A673 (cell line): ENCODE measurements at regions of chr15 and their contacts with region 1.

Region 1: DNA sequence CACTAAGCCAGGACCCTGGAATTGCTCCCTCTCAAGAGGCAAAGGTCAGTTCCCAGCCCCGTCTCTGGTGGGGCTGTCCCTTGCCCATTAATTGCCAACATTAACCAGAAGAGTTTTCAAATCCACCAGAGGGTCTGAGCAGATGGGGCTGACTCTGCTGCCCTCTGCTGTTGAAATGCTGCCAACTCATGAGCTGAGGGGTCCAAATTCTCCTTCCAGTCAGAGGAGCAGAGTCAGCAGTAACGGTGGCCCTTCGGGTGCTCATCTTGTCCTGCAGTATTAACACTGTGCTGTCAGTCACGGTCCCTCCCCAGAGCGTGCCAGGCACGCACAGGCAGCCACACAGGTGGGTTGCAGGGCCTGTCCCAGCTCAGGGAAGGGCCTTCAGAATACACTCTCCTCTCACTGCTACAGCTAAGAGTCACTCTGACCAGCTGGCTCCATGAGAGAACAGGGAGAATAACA is 10.7 kb upstream of the SPTBN5 start:
- DNase-seq: peak; percentile 77
- H3K4me3 ChIP-seq: no peak overlapping the region
- H3K27ac ChIP-seq: no peak overlapping the region
- H3K4me1 ChIP-seq: no peaks in the 10 kb centered on the region
- H3K27me3 ChIP-seq: no peaks in the 10 kb centered on the region
- CTCF ChIP-seq: peak; percentile 92

Region 2: DNA sequence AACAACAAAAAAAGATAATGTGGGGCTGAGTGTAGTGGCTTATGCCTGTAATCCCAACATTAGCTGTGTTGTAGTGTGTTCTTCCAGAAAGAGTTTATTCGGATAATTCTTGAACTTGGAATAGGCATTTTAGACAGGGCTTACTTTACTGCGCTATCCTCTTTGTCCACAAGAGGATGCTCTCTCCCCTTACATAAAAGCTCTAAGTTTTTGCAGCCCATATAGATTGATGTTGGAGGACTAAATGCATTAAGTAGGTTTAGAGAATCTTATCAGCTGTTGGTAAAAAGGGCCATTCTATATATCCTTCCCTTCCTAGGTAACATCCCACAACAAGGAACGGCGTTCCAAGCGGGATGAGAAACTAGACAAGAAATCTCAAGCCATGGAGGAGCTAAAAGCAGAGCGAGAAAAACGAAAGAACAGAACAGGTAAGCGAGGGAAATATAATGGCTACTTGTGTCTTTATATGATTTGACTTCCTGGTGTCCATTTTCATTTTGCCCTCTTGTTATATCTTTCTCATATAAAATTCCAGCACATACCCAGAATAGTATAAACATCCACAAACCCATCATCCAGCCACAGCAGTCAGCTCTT is 438.7 kb before region 1 on chr15:
- CTCF ChIA-PET with region 1: interaction called, 10 read pairs
- POLR2A ChIA-PET with region 1: no interaction called
- intact Hi-C with region 1: loop called (anchors 5 kb)
- DNase-seq: peak; percentile 70
- H3K4me3 ChIP-seq: no peak overlapping the region
- H3K27ac ChIP-seq: no peak overlapping the region
- H3K4me1 ChIP-seq: no peaks in the 10 kb centered on the region
- H3K27me3 ChIP-seq: no peaks in the 10 kb centered on the region
- CTCF ChIP-seq: peak; percentile 94

Region 3: DNA sequence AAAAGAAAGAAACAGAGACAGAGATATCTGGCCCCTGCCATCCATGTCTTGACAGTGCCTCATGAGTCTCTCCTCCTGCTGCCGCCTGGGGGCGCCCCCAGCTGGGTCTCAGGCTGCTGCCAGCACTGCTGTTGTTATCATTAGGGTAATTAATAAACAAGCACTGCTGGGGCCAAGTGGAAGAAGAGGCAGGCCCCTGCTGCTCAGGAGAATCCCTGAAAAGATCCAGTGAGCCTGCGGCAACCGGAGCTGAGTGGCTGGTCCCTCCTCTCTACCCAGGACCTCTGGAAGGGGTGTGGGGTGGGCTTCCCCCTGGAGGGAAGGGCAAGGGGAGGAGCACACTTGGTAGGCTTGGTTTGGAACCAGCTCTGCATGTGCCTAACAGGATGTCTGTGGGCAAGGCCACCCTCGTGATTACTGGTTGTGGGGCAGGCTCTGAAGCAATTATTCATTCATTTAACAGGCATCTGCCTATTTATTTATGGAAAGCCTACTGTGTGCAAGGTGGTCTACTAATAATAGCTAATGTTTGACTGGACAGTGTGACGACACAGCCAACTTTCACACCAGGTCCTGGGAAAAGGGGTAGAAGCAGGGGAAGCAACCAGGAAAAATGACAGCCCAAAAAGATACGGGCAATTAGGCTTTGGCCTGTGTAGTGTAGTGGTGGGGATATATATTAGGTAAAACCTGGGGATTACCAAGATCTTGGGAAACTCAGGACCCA is 346.7 kb before region 1 on chr15:
- CTCF ChIA-PET with region 1: interaction called, 8 read pairs
- POLR2A ChIA-PET with region 1: no interaction called
- intact Hi-C with region 1: loop called (anchors 10 kb)
- DNase-seq: peak; percentile 88
- H3K4me3 ChIP-seq: peak overlapping the region; percentile 68
- H3K27ac ChIP-seq: no peak overlapping the region
- H3K4me1 ChIP-seq: peaks cover 15% of the 10 kb centered on the region
- H3K27me3 ChIP-seq: no peaks in the 10 kb centered on the region
- CTCF ChIP-seq: peak; percentile 98

Region 4: DNA sequence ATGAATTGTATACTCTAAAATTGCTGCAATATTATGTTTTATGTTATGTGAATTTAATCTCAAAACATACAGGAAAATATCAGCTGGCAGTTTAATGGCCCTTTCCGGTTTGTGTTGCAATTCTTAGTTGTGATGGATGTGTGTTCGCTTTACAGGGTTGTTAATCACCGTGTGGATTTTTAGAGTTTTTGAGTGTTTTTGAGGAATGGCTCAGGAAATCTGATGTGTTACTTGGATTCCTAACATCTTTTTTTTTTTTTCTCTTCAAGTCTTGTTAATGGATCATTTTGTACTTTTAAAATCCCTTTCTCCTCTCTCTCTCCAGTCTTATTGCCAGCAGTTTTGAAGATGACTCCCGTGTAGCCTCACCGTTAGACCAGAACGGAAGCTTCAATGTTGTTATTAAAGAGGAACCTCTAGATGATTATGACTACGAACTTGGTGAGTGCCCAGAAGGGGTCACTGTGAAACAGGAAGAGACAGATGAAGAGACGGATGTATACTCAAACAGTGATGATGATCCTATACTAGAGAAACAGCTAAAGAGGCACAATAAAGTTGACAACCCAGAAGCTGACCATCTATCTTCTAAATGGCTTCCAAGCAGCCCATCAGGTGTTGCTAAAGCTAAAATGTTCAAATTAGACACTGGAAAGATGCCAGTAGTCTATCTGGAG is 208.7 kb before region 1 on chr15:
- CTCF ChIA-PET with region 1: interaction called, 15 read pairs
- POLR2A ChIA-PET with region 1: no interaction called
- intact Hi-C with region 1: no loop called
- DNase-seq: peak; percentile 84
- H3K4me3 ChIP-seq: peak overlapping the region; percentile 21
- H3K27ac ChIP-seq: peak overlapping the region; percentile 58
- H3K4me1 ChIP-seq: peaks cover 20% of the 10 kb centered on the region
- H3K27me3 ChIP-seq: no peaks in the 10 kb centered on the region
- CTCF ChIP-seq: peak; percentile 74

Region 5: DNA sequence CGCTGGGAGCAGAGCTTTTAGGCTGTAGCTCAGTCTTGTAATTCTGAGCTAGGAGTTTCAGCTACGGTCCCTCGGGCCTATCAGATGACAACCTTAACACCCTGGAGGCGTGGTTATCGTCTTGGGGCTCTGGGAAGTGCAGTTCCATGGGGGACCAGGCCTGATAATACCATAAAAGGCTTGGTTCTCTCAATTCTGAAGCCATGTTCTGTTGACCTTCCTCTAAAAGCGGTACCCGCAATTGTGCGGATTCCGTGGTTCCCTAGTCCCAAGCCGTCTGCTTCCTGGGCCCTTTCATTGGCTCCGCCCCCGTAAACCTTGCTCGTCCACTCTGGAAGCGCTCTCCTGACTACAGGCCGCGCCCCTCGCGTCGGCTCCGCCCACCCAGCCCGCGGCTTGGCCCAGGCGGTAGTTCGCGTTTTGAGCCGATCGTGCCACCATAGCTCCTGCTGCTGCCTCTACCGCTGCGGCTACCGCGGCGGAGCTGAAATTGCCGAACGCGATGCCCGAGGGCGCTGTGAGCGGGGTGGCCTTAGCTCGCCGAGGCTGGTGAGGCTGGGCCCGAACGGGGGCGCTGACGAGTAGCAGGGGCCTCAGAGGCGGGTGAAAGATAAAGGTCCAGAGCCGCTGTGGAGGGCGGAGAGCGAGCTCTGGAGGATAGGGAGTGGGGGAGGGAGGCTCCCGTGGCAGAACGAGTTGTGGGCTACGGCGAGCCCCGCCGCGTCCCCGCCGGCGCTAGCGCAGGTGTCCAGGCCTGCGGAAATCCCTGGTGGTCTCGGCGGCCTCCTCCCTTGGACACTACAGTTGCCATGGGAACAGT is 130.3 kb before region 1 on chr15 and contains the start of gene MAPKBP1:
- CTCF ChIA-PET with region 1: interaction called, 48 read pairs
- POLR2A ChIA-PET with region 1: no interaction called
- intact Hi-C with region 1: loop called (anchors 1 kb)
- DNase-seq: peak; percentile 99
- H3K4me3 ChIP-seq: peak within 1 kb of the TSS; percentile 65
- H3K27ac ChIP-seq: peak within 1 kb of the TSS; percentile 78
- H3K4me1 ChIP-seq: peaks cover 35% of the 10 kb centered on the region
- H3K27me3 ChIP-seq: no peaks in the 10 kb centered on the region
- CTCF ChIP-seq: peak; percentile 94
- total RNA-seq, gene MAPKBP1: 29.3 and 30.7 TPM in 2 replicates